Activated CD4-positive, alpha-beta T cell treated with anti-CD3 and anti-CD28 coated beads, Interleukin-2, amount 10 ng/mL, durations not matched to agents 24 days and 14 days (primary cell): ENCODE measurements at regions of chr14 and their contacts with region 1.

Region 1: GRCh38 chr14:20613094-20614037 is 22.2 kb upstream of the RNASE12 start:
- DNase-seq: peak; percentile 94
- H3K4me3 Mint-ChIP-seq: no peak overlapping the region
- H3K27ac Mint-ChIP-seq: no peak overlapping the region
- H3K4me1 Mint-ChIP-seq: peaks cover 14% of the 10 kb centered on the region
- H3K27me3 Mint-ChIP-seq: peaks cover 1% of the 10 kb centered on the region

Region 2: GRCh38 chr14:20327005-20327869 is 286.1 kb before region 1 on chr14:
- intact Hi-C with region 1: loop called (anchors 1 kb)
- DNase-seq: peak; percentile 83
- H3K4me3 Mint-ChIP-seq: peak overlapping the region; percentile 56
- H3K27ac Mint-ChIP-seq: peak overlapping the region; percentile 31
- H3K4me1 Mint-ChIP-seq: peaks cover 31% of the 10 kb centered on the region
- H3K27me3 Mint-ChIP-seq: no peaks in the 10 kb centered on the region

Region 3: GRCh38 chr14:20413045-20413799 is 200.1 kb before region 1 on chr14 and contains the start of gene TEP1:
- intact Hi-C with region 1: loop called (anchors 1 kb)
- DNase-seq: peak; percentile 93
- H3K4me3 Mint-ChIP-seq: peak within 1 kb of the TSS; percentile 97
- H3K27ac Mint-ChIP-seq: peak within 1 kb of the TSS; percentile 96
- H3K4me1 Mint-ChIP-seq: peaks cover 43% of the 10 kb centered on the region
- H3K27me3 Mint-ChIP-seq: no peaks in the 10 kb centered on the region
- total RNA-seq, gene TEP1: 34.6 and 35.8 TPM in 2 replicates

Region 4: DNA sequence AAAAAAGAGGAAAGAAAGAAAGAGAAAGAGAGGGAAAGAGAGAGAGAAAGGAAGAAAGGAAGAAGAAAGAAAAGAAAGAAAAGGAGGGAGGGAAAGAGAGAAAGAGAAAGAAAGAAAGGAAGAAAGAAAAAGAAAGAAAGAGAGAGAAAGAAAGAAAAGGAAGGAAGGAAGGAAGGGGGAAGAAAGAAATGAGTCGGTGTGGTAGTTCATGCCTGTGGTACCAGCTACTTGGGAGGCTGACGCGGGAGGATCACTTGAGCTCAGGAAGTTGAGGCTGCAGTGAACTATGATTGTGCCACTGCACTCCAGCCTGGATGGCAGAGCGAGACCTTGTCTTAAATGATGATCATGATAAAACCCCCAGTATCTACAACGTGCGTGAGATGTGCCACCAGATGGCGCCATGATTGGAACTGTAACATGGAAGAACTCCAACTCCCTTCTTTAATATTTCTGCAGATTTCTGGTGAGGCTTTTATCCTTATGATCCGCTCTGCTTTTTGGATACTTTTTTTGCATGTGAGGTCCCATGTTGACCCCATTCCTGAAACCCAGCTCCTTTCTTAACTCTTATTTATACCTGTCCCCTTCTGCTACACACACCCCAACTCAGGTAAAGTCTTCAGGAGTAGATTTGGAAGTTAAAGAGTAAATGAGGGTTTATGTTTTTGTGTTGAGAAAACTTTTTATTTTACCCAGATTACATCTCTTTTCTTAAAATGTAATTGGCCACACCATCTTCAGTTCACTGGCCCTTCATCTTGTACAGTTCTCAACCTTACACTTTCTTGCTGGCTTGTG is 82.4 kb before region 1 on chr14:
- intact Hi-C with region 1: loop called (anchors 1 kb)
- DNase-seq: peak; percentile 88
- H3K4me3 Mint-ChIP-seq: peak overlapping the region; percentile 4
- H3K27ac Mint-ChIP-seq: no peak overlapping the region
- H3K4me1 Mint-ChIP-seq: peaks cover 6% of the 10 kb centered on the region
- H3K27me3 Mint-ChIP-seq: peaks cover 49% of the 10 kb centered on the region

Region 5: DNA sequence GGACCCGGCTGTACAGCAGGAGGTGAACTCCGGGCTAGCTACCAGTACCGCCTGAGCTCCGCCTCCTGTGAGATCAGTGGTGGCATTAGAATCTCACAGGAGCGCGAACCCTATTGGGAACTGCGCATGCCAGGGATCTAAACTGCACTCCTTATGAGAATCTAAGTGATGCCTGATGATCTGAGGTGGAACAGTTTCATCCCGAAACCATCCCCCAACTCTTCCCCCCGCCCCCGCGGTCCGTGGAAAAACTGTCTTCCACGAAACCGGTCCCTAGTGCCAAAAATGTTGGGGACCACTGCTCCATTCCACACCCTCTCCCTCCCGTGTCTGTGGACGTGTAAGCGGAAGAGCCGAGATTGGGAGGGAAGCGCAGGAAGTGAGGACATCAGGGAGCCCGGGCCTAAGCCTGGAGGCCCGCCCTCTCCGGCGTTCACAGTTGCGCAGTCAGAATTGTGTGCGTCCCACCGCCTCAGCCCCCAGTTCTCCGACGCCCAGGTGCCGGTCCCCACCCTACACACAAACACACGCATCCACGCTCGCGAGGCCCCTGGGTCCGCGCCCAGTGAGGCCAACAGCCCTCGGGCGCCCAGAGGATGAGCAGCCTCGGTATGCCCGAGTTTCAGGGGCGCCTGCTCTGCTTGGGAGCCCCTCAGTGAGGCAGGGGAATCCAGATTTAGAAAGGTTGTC is 69.2 kb after region 1 on chr14:
- intact Hi-C with region 1: loop called (anchors 1 kb)
- DNase-seq: peak; percentile 92
- H3K4me3 Mint-ChIP-seq: no peak overlapping the region
- H3K27ac Mint-ChIP-seq: no peak overlapping the region
- H3K4me1 Mint-ChIP-seq: peaks cover 27% of the 10 kb centered on the region
- H3K27me3 Mint-ChIP-seq: peaks cover 2% of the 10 kb centered on the region

Region 6: DNA sequence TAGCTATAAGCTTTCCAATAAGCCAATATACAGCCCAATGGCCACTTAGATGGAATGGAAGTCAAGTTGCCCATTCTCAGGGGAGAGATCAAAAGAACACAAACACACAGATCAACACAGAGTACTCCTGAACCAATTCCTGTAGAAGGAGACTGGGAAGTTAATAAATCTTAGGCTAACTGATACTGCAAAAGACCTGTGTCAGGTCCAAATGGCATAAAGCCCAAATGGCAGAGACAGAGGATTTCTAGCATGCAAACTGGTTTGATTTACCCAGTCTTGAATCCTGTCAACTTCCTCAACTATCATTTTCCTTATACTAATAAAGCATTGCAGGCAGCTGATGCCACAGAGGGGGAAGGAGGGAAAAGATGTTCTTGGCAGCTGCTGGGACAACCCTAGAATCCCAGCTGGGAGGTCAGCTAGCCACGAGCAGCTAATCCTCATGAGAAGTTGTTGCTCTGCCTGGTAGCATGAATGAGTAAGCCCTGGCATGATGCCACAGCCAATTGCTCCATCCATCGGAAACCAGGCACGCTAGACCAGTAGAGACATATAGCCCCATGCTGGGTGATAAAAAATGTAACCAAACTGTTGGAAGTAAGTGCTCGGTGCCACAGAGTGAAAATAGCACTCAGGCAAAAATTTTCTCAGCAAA is 101.4 kb after region 1 on chr14:
- intact Hi-C with region 1: no loop called
- DNase-seq: no peak
- H3K4me3 Mint-ChIP-seq: no peak overlapping the region
- H3K27ac Mint-ChIP-seq: no peak overlapping the region
- H3K4me1 Mint-ChIP-seq: no peaks in the 10 kb centered on the region
- H3K27me3 Mint-ChIP-seq: peaks cover 6% of the 10 kb centered on the region

Region 7: DNA sequence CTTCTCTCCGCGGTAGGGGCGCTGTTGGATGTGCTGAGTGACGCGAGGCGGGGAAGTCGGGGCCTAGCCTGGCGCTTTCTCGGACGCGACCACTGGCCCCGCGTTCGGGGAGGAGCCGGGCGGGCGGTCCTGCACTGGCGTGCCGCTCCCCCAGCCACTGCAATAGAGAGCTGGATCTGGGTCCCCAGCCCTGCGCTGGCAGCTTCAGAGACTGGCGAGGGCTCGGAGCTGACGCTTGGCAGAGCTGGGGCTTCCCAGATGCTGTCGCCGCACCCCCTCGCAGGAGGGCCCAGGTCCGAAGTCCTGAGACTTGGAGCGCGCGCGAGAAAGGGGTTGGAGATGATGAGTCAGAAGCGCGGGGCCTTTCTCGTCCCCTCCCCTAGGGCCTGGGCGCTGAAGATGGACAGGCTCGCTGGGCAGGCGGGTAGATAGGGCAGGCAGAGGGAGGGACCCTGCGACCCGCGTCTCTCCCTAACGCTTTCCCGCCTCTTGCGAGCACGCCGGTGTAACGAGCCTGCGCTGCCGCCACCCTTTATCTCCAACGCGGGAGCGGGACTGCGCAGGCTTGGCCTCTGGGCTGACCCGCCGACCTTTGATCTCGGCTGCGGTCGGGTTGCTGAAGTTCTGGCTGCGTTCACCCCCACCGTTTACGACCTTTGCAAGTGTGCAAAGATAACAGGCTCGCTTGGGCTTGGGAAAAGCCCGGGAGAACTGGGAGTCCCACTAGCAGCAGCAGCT is 490.5 kb after region 1 on chr14:
- intact Hi-C with region 1: loop called (anchors 5 kb)
- DNase-seq: peak; percentile 98
- H3K4me3 Mint-ChIP-seq: peak overlapping the region; percentile 93
- H3K27ac Mint-ChIP-seq: peak overlapping the region; percentile 94
- H3K4me1 Mint-ChIP-seq: peaks cover 35% of the 10 kb centered on the region
- H3K27me3 Mint-ChIP-seq: peaks cover 9% of the 10 kb centered on the region